ENCODE measurements at regions of chr12 and their contacts with region 1.

Region 1: DNA sequence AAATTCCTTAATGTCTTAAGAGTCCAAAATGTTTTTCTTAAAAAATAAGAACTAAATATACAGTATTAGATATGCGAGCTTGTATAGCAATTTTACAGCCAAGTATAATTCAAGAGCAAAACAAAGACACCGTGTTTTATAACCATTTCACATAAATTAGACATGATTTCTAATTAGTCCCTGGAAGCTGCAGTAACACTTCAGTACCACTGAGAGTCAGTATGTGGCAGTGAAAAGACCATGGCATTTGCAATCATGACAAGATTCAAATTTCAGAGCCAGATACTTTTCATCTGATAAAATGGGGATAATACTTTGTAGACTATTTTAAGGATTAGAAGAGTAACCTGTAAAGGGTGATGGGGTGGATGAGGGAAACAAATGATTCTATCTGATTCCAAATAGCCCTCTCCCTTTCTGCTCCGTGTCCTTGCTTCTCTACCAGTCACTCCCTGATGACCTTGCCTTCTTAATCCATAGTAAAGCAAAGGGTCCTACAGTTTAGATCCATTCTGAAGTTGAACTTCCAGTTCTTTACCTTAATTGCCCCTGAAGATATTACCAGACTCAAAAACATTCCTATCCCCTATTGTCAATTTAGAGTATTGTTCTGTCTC is 145.4 kb upstream of the ABCD2 start:
- DNase-seq: peak in 1 of 35 experiments; percentile 40
- ATAC-seq: peak in 1 of 4 experiments; percentile 52
- H3K4me3 ChIP-seq: no peak overlapping the region
- H3K4me3 Mint-ChIP-seq: no peak overlapping the region
- H3K27ac ChIP-seq: no peak overlapping the region
- H3K27ac Mint-ChIP-seq: no peak overlapping the region
- H3K4me1 ChIP-seq: no peaks in the 10 kb centered on the region
- H3K4me1 Mint-ChIP-seq: no peaks in the 10 kb centered on the region
- H3K27me3 ChIP-seq: no peaks in the 10 kb centered on the region
- H3K27me3 Mint-ChIP-seq: no peaks in the 10 kb centered on the region

Region 2: GRCh38 chr12:39798429-39798828 is 33.4 kb after region 1 on chr12:
- CTCF ChIA-PET with region 1: no interaction called
- POLR2A ChIA-PET with region 1: interaction called in 1 of 2 experiments, 11 read pairs
- DNase-seq: no peak
- ATAC-seq: no peak
- H3K4me3 ChIP-seq: no peak overlapping the region
- H3K4me3 Mint-ChIP-seq: no peak overlapping the region
- H3K27ac ChIP-seq: no peak overlapping the region
- H3K27ac Mint-ChIP-seq: no peak overlapping the region
- H3K4me1 ChIP-seq: no peaks in the 10 kb centered on the region
- H3K4me1 Mint-ChIP-seq: no peaks in the 10 kb centered on the region
- H3K27me3 ChIP-seq: no peaks in the 10 kb centered on the region
- H3K27me3 Mint-ChIP-seq: no peaks in the 10 kb centered on the region

Measured in T-cell (primary cell).